ENCODE measurements at regions of chr20 and their contacts with region 1.

Region 1: DNA sequence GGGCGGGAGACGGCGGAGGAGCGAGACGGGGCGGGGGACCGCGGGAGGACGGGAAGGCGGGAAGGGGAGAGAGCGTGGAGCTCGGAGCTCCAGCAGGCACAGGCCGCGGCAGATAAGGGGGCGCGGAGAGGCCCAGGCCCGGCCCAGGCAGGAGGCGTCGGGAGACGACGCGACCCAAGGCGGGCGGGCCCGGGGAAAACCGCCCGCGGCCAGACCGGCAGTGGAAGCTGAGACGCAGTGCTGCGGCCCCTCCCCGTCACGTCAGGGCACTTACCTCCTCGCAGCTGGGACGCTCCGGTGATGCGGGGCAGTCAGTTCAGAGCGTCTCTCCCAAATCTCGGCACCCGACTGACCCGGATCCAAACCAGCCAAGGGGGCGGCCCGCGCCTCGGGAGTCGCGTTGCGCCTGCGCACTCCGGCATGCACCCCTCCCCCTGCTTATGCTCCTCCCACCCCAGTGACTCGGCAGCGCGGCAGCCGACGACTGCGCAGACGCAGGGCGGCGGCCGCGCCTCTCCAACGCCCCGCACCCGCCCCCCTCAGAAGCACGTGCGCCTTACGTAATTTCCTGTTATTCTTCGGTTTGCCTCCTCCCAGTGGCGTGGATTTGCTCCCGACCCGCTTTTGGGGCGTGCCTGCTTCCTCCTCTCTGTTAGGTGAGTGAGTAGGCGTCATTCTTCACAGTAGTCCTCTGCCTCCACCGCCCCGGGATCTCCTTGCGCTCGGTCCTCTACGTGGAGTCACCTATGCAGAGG is at the start of gene OSER1:
- DNase-seq: peak; percentile 99
- ATAC-seq: peak; percentile 80
- H3K4me3 Mint-ChIP-seq: peak within 1 kb of the TSS; percentile 98
- H3K27ac Mint-ChIP-seq: peak within 1 kb of the TSS; percentile 98
- H3K4me1 Mint-ChIP-seq: peaks cover 65% of the 10 kb centered on the region
- H3K27me3 Mint-ChIP-seq: no peaks in the 10 kb centered on the region
- CTCF ChIP-seq: no peak
- total RNA-seq, gene OSER1: 47.3 and 48.9 TPM in 2 replicates

Region 2: GRCh38 chr20:43456809-43457639 is 753.6 kb before region 1 on chr20:
- CTCF ChIA-PET with region 1: no interaction called
- POLR2A ChIA-PET with region 1: interaction called, 10 read pairs
- intact Hi-C with region 1: loop called (anchors 2 kb)
- DNase-seq: no peak
- ATAC-seq: peak; percentile 83
- H3K4me3 Mint-ChIP-seq: peak overlapping the region; percentile 95
- H3K27ac Mint-ChIP-seq: peak overlapping the region; percentile 98
- H3K4me1 Mint-ChIP-seq: peaks cover 31% of the 10 kb centered on the region
- H3K27me3 Mint-ChIP-seq: peaks cover 5% of the 10 kb centered on the region
- CTCF ChIP-seq: no peak

Region 3: DNA sequence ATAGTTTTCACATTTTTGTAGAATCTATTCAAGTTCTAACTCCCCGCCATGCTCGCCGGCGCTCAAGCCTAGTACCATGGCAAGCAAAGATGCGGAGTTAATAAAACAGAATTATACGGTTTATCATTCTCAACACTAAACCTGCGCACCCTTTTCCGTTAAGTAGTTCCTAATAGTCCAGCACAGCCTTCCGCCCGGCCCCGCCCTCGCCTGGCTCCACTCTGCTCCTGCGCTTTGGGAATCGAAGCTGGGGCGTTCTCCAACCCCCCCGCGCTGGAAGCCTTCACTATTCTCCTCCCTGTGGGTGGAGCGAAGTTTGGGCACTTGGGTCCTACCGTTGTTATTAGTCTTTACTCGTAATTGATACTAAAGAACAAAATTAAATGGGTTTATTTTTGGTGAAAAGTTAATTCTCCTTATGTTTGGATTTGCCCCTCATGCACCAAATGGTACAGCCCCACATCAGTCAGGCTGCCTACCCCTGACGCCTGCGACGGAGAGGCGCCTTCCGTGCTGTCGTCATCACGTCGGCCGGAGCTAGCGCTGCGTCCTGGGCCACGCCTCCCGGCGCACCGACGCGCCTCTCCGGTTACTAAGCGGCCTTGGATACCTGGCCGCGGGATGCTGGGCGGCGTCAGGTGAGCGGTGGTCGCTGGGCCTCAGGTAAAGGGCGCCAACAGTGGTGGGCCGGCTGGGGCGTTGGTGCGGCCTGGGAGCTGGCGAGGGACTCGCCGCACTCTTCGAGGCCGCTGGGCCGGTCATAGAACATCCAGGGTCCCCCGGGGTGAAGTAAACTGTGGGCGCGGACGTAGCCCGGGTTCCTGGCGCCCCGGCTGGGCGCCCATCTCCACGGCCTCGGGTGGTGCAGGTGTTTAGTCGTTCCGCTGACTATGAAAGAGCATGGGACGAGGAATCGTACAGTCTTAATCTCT is 619.9 kb before region 1 on chr20 and contains the start of gene IFT52:
- CTCF ChIA-PET with region 1: no interaction called
- POLR2A ChIA-PET with region 1: no interaction called
- intact Hi-C with region 1: loop called (anchors 2 kb)
- DNase-seq: peak; percentile 83
- ATAC-seq: peak; percentile 97
- H3K4me3 Mint-ChIP-seq: peak within 1 kb of the TSS; percentile 94
- H3K27ac Mint-ChIP-seq: peak within 1 kb of the TSS; percentile 95
- H3K4me1 Mint-ChIP-seq: peaks cover 17% of the 10 kb centered on the region
- H3K27me3 Mint-ChIP-seq: peaks cover 2% of the 10 kb centered on the region
- CTCF ChIP-seq: no peak
- total RNA-seq, gene IFT52: 18.7 and 20.8 TPM in 2 replicates

Region 4: DNA sequence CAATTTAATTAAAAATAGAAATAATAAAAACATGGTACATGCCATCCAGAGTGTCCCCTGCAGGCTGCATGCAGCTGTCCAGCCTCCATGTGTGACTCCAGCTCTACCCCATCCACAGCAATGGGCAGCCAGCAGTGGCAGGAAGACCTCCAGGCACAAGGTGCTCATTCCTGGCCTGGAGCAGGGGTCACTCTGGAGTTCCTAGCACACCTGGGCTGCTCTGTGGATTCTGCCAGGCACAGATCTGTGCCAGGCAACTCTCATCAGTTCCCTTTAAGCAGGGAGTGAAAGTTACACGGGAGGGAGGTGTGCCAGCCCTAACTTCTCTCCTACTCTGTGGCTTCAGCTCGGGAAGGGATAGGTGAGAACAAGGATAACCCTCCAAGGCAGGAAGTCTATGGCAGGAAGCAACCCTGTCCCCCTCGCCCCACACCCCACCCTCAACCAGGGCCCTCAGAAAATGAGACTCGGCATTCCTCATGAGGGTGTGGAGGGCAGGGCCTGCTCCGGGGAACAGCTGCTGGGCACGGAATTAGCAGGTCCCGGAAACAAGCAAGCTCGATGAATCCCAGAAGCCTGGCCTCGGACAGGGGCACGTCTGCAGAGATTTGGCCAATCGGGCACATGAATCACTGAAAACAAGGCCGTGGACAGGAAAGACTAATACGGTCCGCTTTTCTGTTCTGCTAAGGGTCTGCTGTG is 33.6 kb before region 1 on chr20:
- CTCF ChIA-PET with region 1: no interaction called
- POLR2A ChIA-PET with region 1: no interaction called
- intact Hi-C with region 1: no loop called
- DNase-seq: no peak
- ATAC-seq: no peak
- H3K4me3 Mint-ChIP-seq: no peak overlapping the region
- H3K27ac Mint-ChIP-seq: no peak overlapping the region
- H3K4me1 Mint-ChIP-seq: no peaks in the 10 kb centered on the region
- H3K27me3 Mint-ChIP-seq: peaks cover 16% of the 10 kb centered on the region
- CTCF ChIP-seq: no peak

Region 5: DNA sequence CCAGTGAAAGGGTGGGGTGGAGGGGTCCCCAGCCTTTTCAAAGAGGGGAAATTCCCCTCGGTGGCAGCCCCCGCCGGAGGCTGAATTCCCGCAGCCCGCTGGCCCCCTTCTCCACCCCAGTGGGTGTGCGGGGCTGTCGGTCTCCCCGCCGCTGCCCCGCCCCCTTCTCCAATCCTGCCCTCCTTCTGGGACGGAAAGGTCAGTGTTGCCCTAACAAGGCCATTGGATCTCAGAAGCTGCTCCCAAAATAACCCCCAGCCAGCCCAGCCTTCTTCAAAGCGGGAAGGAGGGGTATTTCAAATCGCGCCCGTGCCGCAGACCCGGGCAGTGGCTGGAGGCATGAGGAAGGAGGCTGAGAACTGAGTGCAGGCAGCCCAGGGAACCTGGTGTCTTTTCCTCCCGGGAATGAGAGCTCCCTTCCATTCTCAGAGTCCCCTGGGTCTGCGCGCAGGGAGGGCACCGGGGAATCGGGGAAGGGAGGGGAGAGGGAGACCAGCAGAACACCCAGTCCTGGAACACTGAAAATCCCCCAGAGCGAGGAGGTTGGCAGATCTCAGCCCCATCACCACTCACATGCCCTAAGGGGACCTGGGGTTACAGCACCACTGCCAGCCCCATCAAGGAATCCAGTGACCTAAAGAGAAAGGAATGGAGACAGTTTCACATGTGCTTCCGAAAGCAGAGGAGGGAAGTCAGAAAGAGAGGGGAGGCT is 23.4 kb before region 1 on chr20 and contains the start of gene JPH2:
- CTCF ChIA-PET with region 1: interaction called, 6 read pairs
- POLR2A ChIA-PET with region 1: interaction called, 3 read pairs
- intact Hi-C with region 1: loop called (anchors 2 kb)
- DNase-seq: no peak
- ATAC-seq: peak; percentile 16
- H3K4me3 Mint-ChIP-seq: peak within 1 kb of the TSS; percentile 64
- H3K27ac Mint-ChIP-seq: no peak within 1 kb of the TSS
- H3K4me1 Mint-ChIP-seq: peaks cover 21% of the 10 kb centered on the region
- H3K27me3 Mint-ChIP-seq: peaks cover 41% of the 10 kb centered on the region
- CTCF ChIP-seq: no peak
- total RNA-seq, gene JPH2: not detected in 2 replicates

Region 6: DNA sequence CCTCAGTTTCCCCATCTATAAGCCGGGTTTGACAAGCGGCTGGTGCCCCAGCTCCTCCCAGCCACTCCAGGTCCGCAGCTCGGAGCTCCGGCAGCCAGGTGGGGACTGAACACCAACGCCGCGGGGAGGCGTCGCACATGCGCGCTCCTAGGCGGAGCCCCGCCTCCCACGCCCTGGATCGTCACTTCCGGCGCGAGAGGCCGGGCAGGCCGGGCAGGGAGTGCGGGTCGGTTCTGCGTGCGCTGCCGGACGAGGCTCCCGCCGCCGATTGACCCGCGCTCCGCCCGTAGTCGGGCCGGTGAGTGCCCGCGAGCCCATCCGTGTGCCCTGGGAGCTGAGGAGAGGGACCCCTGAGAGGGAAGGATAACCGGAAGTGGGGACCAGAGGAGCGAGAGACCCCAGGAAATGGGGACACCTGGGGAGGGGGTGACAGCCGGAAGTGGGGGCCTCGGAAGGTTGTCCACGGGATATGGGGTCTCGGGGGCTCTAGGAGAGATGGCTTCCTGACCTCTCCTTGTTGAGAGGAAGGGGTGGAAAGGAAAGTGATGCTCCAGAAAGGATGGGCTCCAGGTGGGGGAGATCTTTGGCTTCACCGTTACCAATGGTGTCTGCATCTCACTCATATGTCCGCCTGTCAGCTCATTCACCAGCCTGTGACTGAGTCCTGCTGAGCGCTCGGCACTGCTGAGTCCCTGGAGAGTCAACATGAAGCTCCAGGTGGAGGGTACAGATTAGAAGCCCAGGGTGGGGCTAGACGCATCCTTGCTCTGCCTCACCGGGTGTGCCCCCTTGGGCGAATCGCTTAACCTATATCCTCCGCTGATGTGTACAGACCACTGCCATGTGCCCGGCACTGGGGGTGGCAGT is 265.3 kb after region 1 on chr20 and contains the start of gene TTPAL:
- CTCF ChIA-PET with region 1: no interaction called
- POLR2A ChIA-PET with region 1: no interaction called
- intact Hi-C with region 1: loop called (anchors 2 kb)
- DNase-seq: peak; percentile 93
- ATAC-seq: peak; percentile 91
- H3K4me3 Mint-ChIP-seq: peak within 1 kb of the TSS; percentile 96
- H3K27ac Mint-ChIP-seq: peak within 1 kb of the TSS; percentile 94
- H3K4me1 Mint-ChIP-seq: peaks cover 40% of the 10 kb centered on the region
- H3K27me3 Mint-ChIP-seq: no peaks in the 10 kb centered on the region
- CTCF ChIP-seq: no peak
- total RNA-seq, gene TTPAL: 27.5 and 27.7 TPM in 2 replicates

Region 7: GRCh38 chr20:44582311-44583025 is 371.9 kb after region 1 on chr20 and contains the start of gene PKIG:
- CTCF ChIA-PET with region 1: no interaction called
- POLR2A ChIA-PET with region 1: no interaction called
- intact Hi-C with region 1: loop called (anchors 2 kb)
- DNase-seq: no peak
- ATAC-seq: no peak
- H3K4me3 Mint-ChIP-seq: peak within 1 kb of the TSS; percentile 94
- H3K27ac Mint-ChIP-seq: peak within 1 kb of the TSS; percentile 96
- H3K4me1 Mint-ChIP-seq: peaks cover 79% of the 10 kb centered on the region
- H3K27me3 Mint-ChIP-seq: no peaks in the 10 kb centered on the region
- CTCF ChIP-seq: no peak
- total RNA-seq, gene PKIG: 181 and 191 TPM in 2 replicates

Region 8: GRCh38 chr20:44678242-44678641 is 467.6 kb after region 1 on chr20:
- CTCF ChIA-PET with region 1: no interaction called
- POLR2A ChIA-PET with region 1: no interaction called
- intact Hi-C with region 1: no loop called
- DNase-seq: no peak
- ATAC-seq: no peak
- H3K4me3 Mint-ChIP-seq: no peak overlapping the region
- H3K27ac Mint-ChIP-seq: no peak overlapping the region
- H3K4me1 Mint-ChIP-seq: no peaks in the 10 kb centered on the region
- H3K27me3 Mint-ChIP-seq: no peaks in the 10 kb centered on the region
- CTCF ChIP-seq: no peak

Region 9: GRCh38 chr20:44966030-44966961 is 755.7 kb after region 1 on chr20 and contains the start of gene STK4:
- CTCF ChIA-PET with region 1: no interaction called
- POLR2A ChIA-PET with region 1: interaction called, 3 read pairs
- intact Hi-C with region 1: loop called (anchors 2 kb)
- DNase-seq: peak; percentile 98
- ATAC-seq: peak; percentile 78
- H3K4me3 Mint-ChIP-seq: peak within 1 kb of the TSS; percentile 99
- H3K27ac Mint-ChIP-seq: peak within 1 kb of the TSS; percentile 97
- H3K4me1 Mint-ChIP-seq: peaks cover 67% of the 10 kb centered on the region
- H3K27me3 Mint-ChIP-seq: no peaks in the 10 kb centered on the region
- CTCF ChIP-seq: no peak
- total RNA-seq, gene STK4: 219 and 245 TPM in 2 replicates